Heart right ventricle (tissue), 16 donors: ENCODE measurements at regions of chr7 and their contacts with region 1.

Region 1: DNA sequence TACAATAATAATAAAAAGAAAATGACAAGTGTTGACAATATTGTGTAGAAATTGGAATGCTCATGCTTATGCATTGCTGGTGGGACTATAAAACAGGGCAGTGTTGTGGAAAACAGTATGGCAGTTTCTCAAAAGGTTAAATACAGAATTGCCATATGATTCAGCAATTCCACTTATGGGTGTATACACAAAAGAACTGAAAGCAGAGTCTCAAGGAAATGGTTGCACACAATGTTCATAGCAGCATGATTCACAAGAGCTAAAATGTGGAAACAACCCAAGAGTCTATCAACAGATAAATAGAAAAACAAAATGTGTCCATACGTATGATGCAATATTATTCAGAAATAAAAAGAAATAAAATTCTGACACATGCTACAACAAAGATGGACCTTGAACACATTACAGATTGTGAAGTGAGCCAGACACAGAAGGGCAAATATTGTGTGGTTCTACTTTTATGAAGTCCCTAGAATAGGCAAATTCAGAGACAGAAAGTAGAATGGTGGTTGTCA is 64.8 kb upstream of the GRM8 start:
- DNase-seq: no peak
- ATAC-seq: no peak
- H3K4me3 ChIP-seq: no peak overlapping the region
- H3K27ac ChIP-seq: no peak overlapping the region
- H3K4me1 ChIP-seq: no peaks in the 10 kb centered on the region
- H3K27me3 ChIP-seq: peaks cover 0 to 12% (median under 1%) of the 10 kb centered on the region in 7 donors
- CTCF ChIP-seq: no peak

Region 2: DNA sequence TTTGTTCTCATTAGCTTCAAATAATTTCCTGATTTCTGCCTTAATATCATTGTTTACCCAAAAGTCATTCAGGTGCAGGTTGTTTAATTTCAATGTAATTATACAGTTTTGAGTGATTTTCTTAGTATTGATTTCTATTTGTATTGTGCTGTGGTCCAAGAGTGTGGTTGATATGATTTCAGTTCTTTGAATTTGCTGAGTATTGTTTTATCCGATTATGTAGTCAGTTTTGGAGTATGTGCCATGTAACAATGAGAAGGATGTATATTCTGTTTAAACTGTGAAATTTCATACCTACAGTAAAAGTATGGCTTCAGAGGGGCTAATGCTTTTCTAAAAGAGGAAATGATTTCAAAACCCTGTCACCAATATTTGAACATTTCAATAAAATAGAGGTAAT is 47.4 kb before region 1 on chr7:
- intact Hi-C with region 1: loop called in 1 of 10 experiments (anchors 1 kb)
- DNase-seq: no peak
- ATAC-seq: no peak
- H3K4me3 ChIP-seq: no peak overlapping the region
- H3K27ac ChIP-seq: no peak overlapping the region
- H3K4me1 ChIP-seq: no peaks in the 10 kb centered on the region
- H3K27me3 ChIP-seq: peaks cover 0 to 52% (median 21%) of the 10 kb centered on the region in 7 donors
- CTCF ChIP-seq: no peak